Activated CD8-positive, alpha-beta T cell treated with anti-CD3 and anti-CD28 coated beads for 36 hours (primary cell): ENCODE measurements at regions of chr9 and their contacts with region 1.

Region 1: DNA sequence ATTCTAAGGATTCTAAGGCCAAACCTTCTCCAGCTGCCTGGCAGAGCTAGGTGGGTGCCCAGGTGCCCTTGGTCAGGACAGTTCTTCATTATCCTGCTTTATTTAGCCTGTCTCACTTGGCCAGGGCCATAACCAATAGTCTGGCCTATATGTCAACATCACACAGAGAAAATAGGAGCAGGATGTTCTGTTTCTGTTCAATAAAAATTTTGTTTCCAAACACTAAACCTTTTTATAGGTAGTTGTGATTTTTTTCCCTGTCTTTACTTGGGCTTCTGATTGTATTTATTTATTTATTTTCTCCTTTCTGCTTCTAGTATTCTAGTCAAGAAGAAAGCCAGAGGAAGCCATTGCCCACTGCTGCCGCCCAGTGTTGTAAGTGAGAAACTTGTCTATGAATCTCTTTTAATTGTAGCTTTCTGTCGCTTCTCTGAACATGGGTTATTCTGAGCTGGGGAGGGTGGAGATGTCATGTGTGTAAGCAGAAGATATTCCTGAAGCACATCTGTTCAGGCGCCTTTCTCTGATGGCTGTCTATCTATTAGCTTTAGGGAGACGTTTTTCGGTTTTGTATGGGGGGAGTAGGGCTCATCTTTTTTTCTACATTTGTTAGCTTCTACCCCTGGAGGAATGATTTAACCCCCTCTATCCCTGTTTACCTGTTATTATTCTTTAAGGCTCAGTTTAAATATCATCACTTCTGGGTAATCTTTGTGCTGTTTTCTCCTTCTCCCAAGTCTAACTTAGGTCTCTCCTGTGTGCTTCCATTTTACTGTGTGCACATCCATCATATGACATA is 97.1 kb downstream of the UNC13B start:
- DNase-seq: peak; percentile 67
- ATAC-seq: peak; percentile 45
- H3K4me3 Mint-ChIP-seq: no peak overlapping the region
- H3K27ac Mint-ChIP-seq: no peak overlapping the region
- H3K4me1 Mint-ChIP-seq: no peaks in the 10 kb centered on the region
- H3K27me3 Mint-ChIP-seq: peaks cover under 1% of the 10 kb centered on the region
- CTCF ChIP-seq: peak; percentile 63

Region 2: GRCh38 chr9:35161713-35162604 is 96.9 kb before region 1 on chr9 and contains the start of gene UNC13B:
- CTCF ChIA-PET with region 1: interaction called, 11 read pairs
- POLR2A ChIA-PET with region 1: no interaction called
- intact Hi-C with region 1: no loop called
- DNase-seq: peak; percentile 79
- ATAC-seq: peak; percentile 92
- H3K4me3 Mint-ChIP-seq: peak within 1 kb of the TSS; percentile 87
- H3K27ac Mint-ChIP-seq: no peak within 1 kb of the TSS
- H3K4me1 Mint-ChIP-seq: peaks cover 17% of the 10 kb centered on the region
- H3K27me3 Mint-ChIP-seq: peaks cover 16% of the 10 kb centered on the region
- CTCF ChIP-seq: no peak
- total RNA-seq, gene UNC13B: 1.3 to 1.9 TPM

Region 3: GRCh38 chr9:35274993-35275392 is 16.1 kb after region 1 on chr9:
- CTCF ChIA-PET with region 1: interaction called, 14 read pairs
- POLR2A ChIA-PET with region 1: no interaction called
- intact Hi-C with region 1: no loop called
- DNase-seq: no peak
- ATAC-seq: no peak
- H3K4me3 Mint-ChIP-seq: no peak overlapping the region
- H3K27ac Mint-ChIP-seq: no peak overlapping the region
- H3K4me1 Mint-ChIP-seq: peaks cover 27% of the 10 kb centered on the region
- H3K27me3 Mint-ChIP-seq: peaks cover 1% of the 10 kb centered on the region
- CTCF ChIP-seq: no peak